Endothelial cell of umbilical vein (primary cell): ENCODE measurements at regions of chr4 and their contacts with region 1.

Region 1: DNA sequence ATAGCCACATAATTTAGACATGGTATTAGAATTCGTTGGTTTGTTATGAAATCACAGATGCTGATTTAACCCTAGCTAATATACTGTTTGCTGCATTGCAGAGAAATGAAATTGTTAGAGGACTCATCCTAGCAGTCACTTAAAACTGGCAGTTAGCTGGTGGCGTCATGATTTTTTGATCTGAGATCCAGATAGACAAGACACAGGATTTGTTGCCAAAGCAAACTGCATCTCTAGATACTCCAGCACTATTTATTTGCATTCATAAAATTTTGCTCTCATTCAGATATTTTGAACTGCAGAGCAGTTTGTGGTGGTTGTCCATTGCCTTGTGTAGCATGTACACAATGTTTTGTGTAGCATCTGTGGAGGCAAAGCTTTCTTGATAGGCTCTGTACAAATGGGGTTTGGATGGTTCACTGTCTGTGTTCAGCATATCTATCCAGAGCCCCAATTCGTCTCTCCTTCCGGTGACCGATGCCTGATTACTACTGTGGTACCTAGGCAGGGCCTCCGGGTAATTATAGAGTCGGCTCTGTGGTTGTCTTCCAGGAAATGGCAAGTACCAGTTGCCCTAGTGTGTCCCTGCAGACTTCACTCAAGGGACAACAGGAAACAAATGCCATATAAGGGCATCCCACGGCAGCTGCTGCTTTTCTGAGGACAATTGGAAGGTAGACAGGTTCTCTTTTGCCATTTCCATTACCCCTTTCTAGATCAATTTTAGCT is 30.1 kb upstream of the SPARCL1 start:
- DNase-seq: no peak
- H3K4me3 ChIP-seq: no peak overlapping the region
- H3K27ac ChIP-seq: no peak overlapping the region
- H3K4me1 ChIP-seq: no peaks in the 10 kb centered on the region
- H3K27me3 ChIP-seq: no peaks in the 10 kb centered on the region
- CTCF ChIP-seq: no peak
- POLR2A ChIP-seq: no peak

Region 2: GRCh38 chr4:87543835-87544461 is 15.3 kb before region 1 on chr4:
- CTCF ChIA-PET with region 1: interaction called, 12 read pairs
- POLR2A ChIA-PET with region 1: no interaction called
- dilution Hi-C with region 1: no loop called
- intact Hi-C with region 1: no loop called
- DNase-seq: peak; percentile 48
- H3K4me3 ChIP-seq: no peak overlapping the region
- H3K27ac ChIP-seq: no peak overlapping the region
- H3K4me1 ChIP-seq: no peaks in the 10 kb centered on the region
- H3K27me3 ChIP-seq: peaks cover 0 to 3% of the 10 kb centered on the region in 2 experiments
- CTCF ChIP-seq: peak; percentile 29 to 47
- POLR2A ChIP-seq: no peak

Region 3: GRCh38 chr4:87785731-87786509 is 226.6 kb after region 1 on chr4:
- CTCF ChIA-PET with region 1: no interaction called
- POLR2A ChIA-PET with region 1: no interaction called
- dilution Hi-C with region 1: no loop called
- intact Hi-C with region 1: no loop called
- DNase-seq: no peak
- H3K4me3 ChIP-seq: no peak overlapping the region
- H3K27ac ChIP-seq: no peak overlapping the region
- H3K4me1 ChIP-seq: no peaks in the 10 kb centered on the region
- H3K27me3 ChIP-seq: peaks cover 2 to 4% of the 10 kb centered on the region in 2 experiments
- CTCF ChIP-seq: no peak
- POLR2A ChIP-seq: no peak